H1 (cell line): ENCODE measurements at regions of chr22 and their contacts with region 1.

Region 1: DNA sequence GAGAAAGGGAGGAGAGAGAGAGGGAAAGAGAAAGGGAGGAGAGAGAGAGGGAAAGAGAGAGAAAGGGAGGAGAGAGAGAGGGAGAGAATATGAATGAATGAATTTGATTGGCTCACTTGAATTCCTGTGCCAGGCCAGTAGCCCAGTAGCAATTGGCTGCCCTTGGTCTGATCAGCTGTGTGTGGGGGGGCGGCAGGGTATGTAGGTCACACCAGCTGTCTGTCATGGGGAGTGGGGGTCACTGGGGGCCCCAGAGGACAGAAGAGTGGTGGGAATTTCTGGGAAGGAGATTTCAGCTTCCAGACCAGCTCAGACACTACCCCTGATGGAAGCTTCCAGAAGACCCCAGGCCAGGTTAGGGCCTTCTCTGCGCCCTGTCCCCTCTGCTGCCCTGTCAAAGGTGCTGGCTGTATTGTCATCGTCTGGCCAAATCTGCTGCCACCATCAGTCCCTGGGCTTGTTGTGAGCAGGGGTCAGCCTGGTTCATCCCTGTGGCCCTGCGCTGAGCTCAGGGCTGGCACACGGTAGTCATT is 21.1 kb downstream of the MPPED1 start:
- DNase-seq: no peak
- H3K4me3 ChIP-seq: no peak overlapping the region
- H3K27ac ChIP-seq: no peak overlapping the region
- H3K4me1 ChIP-seq: peaks cover 0 to under 1% (median 0%) of the 10 kb centered on the region in 4 experiments; a peak in 2 of 7 replicates
- H3K27me3 ChIP-seq: peaks cover 0 to 1% (median 0%) of the 10 kb centered on the region in 4 experiments; a peak in 1 of 7 replicates
- CTCF ChIP-seq: no peak
- EP300 ChIP-seq: no peak
- POLR2A ChIP-seq: no peak
- RAD21 ChIP-seq: no peak

Region 2: GRCh38 chr22:43370036-43370435 is 62.9 kb before region 1 on chr22:
- CTCF ChIA-PET with region 1: no interaction called
- POLR2A ChIA-PET with region 1: no interaction called
- DNase-seq: peak in 1 of 2 experiments; percentile 75
- H3K4me3 ChIP-seq: no peak overlapping the region
- H3K27ac ChIP-seq: no peak overlapping the region
- H3K4me1 ChIP-seq: peaks cover 0 to 8% (median 5%) of the 10 kb centered on the region in 4 experiments; a peak in 4 of 7 replicates
- H3K27me3 ChIP-seq: no peaks in the 10 kb centered on the region
- CTCF ChIP-seq: no peak
- EP300 ChIP-seq: no peak
- POLR2A ChIP-seq: no peak
- RAD21 ChIP-seq: peak; percentile 9 to 31; a peak in 1 of 4 replicates

Region 3: GRCh38 chr22:43446916-43447315 is 14.0 kb after region 1 on chr22:
- CTCF ChIA-PET with region 1: interaction called, 11 read pairs
- POLR2A ChIA-PET with region 1: no interaction called
- DNase-seq: no peak
- H3K4me3 ChIP-seq: no peak overlapping the region
- H3K27ac ChIP-seq: no peak overlapping the region
- H3K4me1 ChIP-seq: no peaks in the 10 kb centered on the region
- H3K27me3 ChIP-seq: no peaks in the 10 kb centered on the region
- CTCF ChIP-seq: no peak
- EP300 ChIP-seq: no peak
- POLR2A ChIP-seq: no peak
- RAD21 ChIP-seq: no peak